ENCODE measurements at regions of chr3 and their contacts with region 1.

Region 1: GRCh38 chr3:3015185-3016089 is 94.7 kb downstream of the IL5RA start:
- DNase-seq: no peak
- ATAC-seq: no peak

Region 2: DNA sequence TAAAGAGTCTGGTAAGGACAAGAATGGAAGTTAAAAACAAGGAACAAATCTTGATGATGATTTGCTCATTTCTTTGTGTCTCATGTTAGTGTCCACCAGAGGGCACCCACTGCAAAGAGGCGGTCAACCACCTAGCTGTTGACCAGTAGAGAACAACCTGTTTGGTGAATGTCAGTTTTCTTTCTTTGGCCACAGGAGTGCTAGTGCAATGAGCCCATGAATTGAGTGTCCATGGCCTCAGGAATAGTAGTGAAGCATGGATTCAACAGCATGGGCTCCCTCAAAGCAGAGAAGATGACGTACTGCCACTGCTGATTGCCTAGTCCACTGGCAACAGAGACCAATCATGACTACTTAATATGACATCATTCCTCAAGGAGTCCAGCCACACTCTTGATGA is 1933.3 kb before region 1 on chr3:
- intact Hi-C with region 1: loop called (anchors 5 kb)
- DNase-seq: no peak
- ATAC-seq: no peak

Region 3: DNA sequence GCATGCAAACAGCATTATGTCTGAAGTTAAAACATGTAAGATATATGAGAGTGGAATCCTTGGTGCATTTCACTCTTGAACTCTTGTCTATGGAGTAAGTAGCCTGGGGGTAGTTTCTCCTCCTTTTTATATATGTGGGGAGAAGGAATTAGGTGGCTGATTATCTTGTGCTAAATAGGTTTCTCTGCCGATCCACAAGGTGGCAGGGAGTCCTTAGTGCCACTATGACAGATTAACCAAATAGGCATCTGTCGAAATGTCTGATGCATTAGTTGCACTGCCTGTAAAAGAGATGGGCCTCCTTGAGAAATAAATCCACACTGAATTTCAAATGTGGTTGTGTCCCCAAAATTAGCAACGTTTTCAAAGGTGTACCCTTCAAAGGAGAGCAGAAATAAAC is 746.7 kb before region 1 on chr3:
- intact Hi-C with region 1: loop called (anchors 10 kb)
- DNase-seq: no peak
- ATAC-seq: no peak